ENCODE measurements at regions of chr22 and their contacts with region 1.

Region 1: GRCh38 chr22:25048659-25049647 is 96.4 kb downstream of the KIAA1671 start:
- DNase-seq: peak; percentile 57

Region 2: DNA sequence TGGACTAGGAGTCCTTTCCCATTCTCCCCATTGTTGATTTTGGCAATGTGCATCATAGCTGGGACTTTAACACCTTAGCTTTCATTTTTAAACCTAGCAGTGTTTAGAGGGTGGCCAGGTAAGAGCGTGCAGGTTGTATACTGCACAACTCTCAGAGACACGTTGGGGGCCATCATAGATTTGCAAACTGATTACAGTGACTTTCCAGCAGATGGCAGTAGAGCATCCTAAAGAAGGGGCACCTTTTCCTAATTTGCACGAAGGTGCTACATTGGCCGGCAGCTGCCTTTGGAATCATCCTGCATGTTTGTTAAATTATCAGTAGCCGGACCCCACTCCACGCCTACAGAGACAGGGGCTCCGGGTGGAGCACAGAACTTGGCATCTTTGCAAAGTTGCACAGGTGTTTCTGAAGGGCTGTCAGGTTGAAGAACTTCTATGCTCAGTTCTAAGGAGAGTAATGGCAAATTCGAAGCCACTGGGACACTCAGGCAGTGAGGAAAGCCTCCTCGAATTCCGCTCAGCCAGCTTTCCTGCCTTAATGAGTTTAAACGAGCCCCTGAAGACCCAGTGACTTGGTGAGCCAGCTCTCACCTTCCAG is 110.1 kb before region 1 on chr22:
- in situ Hi-C with region 1: loop called (anchors 25 kb)
- DNase-seq: peak; percentile 60

Measured in Caki2 (cell line).